ENCODE measurements at regions of chr4 and their contacts with region 1.

Region 1: GRCh38 chr4:69167300-69167699 is 47.2 kb downstream of the UGT2B11 start:
- DNase-seq: no peak
- H3K4me3 Mint-ChIP-seq: no peak overlapping the region
- H3K27ac Mint-ChIP-seq: peak overlapping the region; percentile 51
- H3K4me1 Mint-ChIP-seq: peaks cover 18% of the 10 kb centered on the region
- H3K27me3 Mint-ChIP-seq: no peaks in the 10 kb centered on the region
- CTCF ChIP-seq: no peak

Region 2: GRCh38 chr4:69057620-69058409 is 109.5 kb before region 1 on chr4:
- CTCF ChIA-PET with region 1: interaction called, 3 read pairs
- intact Hi-C with region 1: loop called (anchors 5 kb)
- DNase-seq: peak; percentile 52
- H3K4me3 Mint-ChIP-seq: peak overlapping the region; percentile 24
- H3K27ac Mint-ChIP-seq: peak overlapping the region; percentile 90
- H3K4me1 Mint-ChIP-seq: peaks cover 24% of the 10 kb centered on the region
- H3K27me3 Mint-ChIP-seq: no peaks in the 10 kb centered on the region
- CTCF ChIP-seq: no peak

Region 3: DNA sequence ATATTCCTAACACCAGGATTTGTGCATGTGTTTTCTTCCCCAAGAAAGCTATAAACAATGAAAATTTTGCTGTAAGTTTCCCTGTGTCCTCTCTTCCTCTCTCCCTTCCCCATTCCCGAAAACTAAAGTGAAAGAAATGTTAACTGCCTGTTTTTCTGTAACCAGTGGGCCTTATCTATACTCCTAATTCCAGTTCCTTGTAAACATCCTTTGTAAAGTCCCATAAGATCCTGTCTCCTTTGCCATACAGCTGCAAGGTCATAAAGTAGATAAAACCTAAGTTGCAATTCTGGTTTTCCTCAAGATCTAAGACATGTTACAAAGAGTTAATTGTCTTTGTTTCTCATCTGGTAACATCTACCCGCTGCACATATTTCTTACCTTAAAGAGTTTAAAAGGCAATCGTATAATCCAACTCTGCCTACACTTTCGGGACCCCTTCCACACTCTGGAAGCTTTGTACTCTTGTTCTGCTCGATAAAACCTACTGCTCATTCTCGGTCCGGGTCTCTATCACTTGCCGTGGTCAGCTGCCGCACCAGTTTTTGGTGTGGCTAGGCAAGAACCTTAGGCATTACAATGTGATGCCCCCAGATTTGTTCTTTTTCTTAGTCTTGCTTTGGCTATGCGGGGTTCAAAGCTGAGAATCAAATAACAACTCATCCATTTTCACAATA is 50.5 kb before region 1 on chr4:
- CTCF ChIA-PET with region 1: no interaction called
- intact Hi-C with region 1: loop called (anchors 5 kb)
- DNase-seq: no peak
- H3K4me3 Mint-ChIP-seq: peak overlapping the region; percentile 61
- H3K27ac Mint-ChIP-seq: peak overlapping the region; percentile 78
- H3K4me1 Mint-ChIP-seq: peaks cover 23% of the 10 kb centered on the region
- H3K27me3 Mint-ChIP-seq: no peaks in the 10 kb centered on the region
- CTCF ChIP-seq: no peak

Measured in Calu3 (cell line).